Activated naive CD4-positive, alpha-beta T cell treated with anti-CD3 and anti-CD28 coated beads for 36 hours (primary cell): ENCODE measurements at regions of chr16 and their contacts with region 1.

Region 1: DNA sequence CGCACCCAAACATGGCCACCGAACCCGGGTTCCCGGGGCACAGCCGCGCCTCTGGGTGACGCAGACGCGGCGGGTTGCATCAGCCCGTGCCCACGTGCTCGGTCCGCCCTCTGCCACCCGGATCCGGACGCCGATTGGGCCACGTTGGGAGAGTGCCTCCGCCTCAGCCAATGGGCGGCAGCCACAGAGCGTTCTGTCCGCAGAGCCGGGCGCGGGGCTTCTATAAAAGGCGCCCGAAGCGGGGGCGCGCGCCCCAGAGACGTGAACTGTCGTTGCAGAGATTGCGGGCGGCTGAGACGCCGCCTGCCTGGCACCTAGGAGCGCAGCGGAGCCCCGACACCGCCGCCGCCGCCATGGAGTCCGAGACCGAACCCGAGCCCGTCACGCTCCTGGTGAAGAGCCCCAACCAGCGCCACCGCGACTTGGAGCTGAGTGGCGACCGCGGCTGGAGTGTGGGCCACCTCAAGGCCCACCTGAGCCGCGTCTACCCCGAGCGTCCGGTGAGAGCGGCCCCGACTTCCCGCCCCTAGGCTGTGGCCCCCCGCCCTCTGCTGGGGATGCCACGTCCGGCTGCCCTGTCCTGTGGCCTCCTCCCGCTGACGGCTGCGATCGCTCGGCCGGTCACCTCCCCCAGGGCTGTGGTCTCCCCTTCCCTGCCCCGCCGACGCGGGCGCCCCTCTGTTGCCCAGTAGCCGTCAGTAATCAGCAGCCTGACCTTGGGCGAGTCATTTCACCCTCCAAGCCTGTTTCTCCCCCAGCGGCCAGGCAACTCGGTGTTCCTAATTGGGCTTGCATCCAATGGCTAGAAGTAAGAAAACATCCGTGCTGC is at the start of gene HERPUD1:
- DNase-seq: peak; percentile 99
- H3K4me3 Mint-ChIP-seq: peak within 1 kb of the TSS; percentile 98
- H3K27ac Mint-ChIP-seq: peak within 1 kb of the TSS; percentile 98
- H3K4me1 Mint-ChIP-seq: peaks cover 40% of the 10 kb centered on the region
- H3K27me3 Mint-ChIP-seq: no peaks in the 10 kb centered on the region
- total RNA-seq, gene HERPUD1: 118 to 120 TPM

Region 2: GRCh38 chr16:56681939-56682702 is 250.0 kb before region 1 on chr16 and contains the start of gene MT1X:
- CTCF ChIA-PET with region 1: no interaction called
- intact Hi-C with region 1: loop called (anchors 5 kb)
- DNase-seq: peak; percentile 95
- H3K4me3 Mint-ChIP-seq: peak within 1 kb of the TSS; percentile 92
- H3K27ac Mint-ChIP-seq: peak within 1 kb of the TSS; percentile 96
- H3K4me1 Mint-ChIP-seq: peaks cover 19% of the 10 kb centered on the region
- H3K27me3 Mint-ChIP-seq: no peaks in the 10 kb centered on the region
- total RNA-seq, gene MT1X: 49.9 to 57.9 TPM

Region 3: DNA sequence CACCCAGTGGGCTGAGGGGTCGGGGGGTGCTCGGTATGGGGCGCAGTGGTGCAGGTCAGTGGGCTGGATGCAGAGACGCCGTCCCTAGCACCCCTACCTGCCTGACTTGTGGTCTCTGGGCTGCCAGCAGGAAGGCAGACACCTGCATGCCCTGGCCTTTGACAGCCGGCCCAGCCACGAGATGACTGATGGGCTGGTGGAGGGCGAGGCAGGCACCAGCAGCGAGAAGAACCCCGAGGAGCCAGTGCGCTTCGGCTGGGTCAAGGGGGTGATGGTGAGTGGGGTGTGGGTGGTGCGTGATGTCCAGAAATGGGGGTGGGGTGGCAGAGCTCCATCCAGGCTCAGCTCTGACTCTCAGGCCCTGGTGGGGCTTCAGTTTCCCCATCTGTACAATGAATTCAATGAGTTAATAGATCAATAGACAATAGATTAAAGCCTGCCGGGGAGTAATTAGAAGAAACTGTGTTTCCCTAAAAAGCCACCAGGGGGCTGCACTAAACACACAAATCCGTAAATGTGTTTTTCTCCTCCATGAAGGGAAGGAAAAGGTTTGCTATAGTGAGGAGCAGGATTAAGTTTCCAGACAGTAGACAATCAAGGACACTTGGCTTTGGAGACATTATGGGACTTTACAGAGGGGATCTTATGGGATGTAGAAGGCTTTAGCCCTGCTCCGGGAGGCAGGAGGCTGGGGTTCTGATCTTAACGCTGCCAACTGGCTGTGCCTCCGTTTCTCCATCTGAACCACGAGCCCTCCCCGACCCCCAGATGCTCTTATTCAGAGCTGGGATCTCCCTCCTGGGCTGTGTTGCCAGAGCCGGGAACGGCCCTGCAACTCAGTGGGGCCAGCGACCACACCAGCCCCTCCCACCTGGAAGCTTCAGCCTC is 64.9 kb before region 1 on chr16:
- CTCF ChIA-PET with region 1: interaction called, 5 read pairs
- intact Hi-C with region 1: loop called (anchors 1 kb)
- DNase-seq: peak; percentile 64
- H3K4me3 Mint-ChIP-seq: no peak overlapping the region
- H3K27ac Mint-ChIP-seq: no peak overlapping the region
- H3K4me1 Mint-ChIP-seq: peaks cover 15% of the 10 kb centered on the region
- H3K27me3 Mint-ChIP-seq: no peaks in the 10 kb centered on the region

Region 4: DNA sequence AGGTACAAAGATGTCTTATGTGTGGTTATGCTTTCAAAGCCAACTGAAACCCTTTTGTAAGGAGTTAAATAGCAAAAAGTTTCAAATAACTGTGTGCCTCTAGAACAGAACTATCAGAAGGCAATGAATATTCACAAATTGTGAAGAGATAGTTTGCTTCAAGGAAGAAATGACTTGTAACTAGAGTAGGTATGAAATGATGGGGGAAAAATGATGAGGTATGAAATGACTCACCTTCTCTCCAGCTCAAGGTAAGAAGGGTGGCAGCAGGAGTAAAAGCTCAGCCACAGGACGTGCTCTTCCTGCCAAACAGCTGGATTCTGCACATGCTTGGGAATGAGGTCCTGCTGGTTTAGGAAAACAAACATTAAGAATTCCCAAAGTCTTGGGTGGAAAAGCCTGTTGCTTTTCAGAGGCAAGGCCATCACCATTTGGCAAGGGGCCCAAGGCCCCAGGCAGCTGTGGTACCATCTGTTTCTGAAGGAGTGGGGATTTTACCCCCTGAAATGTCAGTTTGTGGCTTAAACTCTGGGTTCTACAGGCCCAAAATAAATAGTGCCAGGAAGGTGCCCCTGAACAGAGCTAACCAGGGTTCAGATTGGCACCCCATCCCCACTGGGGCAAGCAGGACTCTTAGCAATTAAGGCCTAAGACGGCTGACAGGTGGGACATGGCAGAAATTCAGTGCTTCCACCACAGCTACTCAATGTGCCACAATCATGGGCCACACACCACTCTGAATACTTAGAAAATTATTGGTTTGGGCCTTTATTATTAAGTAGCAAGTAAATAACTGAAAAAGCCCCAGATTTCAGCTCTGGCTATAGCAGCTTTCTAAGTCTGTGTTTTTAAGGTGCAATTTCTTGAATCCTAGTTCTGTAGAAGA is 13.1 kb after region 1 on chr16:
- CTCF ChIA-PET with region 1: interaction called, 7 read pairs
- intact Hi-C with region 1: loop called (anchors 1 kb)
- DNase-seq: peak; percentile 65
- H3K4me3 Mint-ChIP-seq: peak overlapping the region; percentile 3
- H3K27ac Mint-ChIP-seq: peak overlapping the region; percentile 96
- H3K4me1 Mint-ChIP-seq: peaks cover 56% of the 10 kb centered on the region
- H3K27me3 Mint-ChIP-seq: no peaks in the 10 kb centered on the region

Region 5: GRCh38 chr16:56988948-56989945 is 57.1 kb after region 1 on chr16 and contains the start of gene NLRC5:
- CTCF ChIA-PET with region 1: no interaction called
- intact Hi-C with region 1: loop called (anchors 2 kb)
- DNase-seq: peak; percentile 95
- H3K4me3 Mint-ChIP-seq: peak within 1 kb of the TSS; percentile 99
- H3K27ac Mint-ChIP-seq: peak within 1 kb of the TSS; percentile 100
- H3K4me1 Mint-ChIP-seq: peaks cover 73% of the 10 kb centered on the region
- H3K27me3 Mint-ChIP-seq: no peaks in the 10 kb centered on the region
- total RNA-seq, gene NLRC5: 104 to 119 TPM

Region 6: GRCh38 chr16:57045694-57046381 is 113.7 kb after region 1 on chr16:
- CTCF ChIA-PET with region 1: no interaction called
- intact Hi-C with region 1: loop called (anchors 1 kb)
- DNase-seq: peak; percentile 51
- H3K4me3 Mint-ChIP-seq: no peak overlapping the region
- H3K27ac Mint-ChIP-seq: peak overlapping the region; percentile 73
- H3K4me1 Mint-ChIP-seq: peaks cover 65% of the 10 kb centered on the region
- H3K27me3 Mint-ChIP-seq: no peaks in the 10 kb centered on the region

Region 7: DNA sequence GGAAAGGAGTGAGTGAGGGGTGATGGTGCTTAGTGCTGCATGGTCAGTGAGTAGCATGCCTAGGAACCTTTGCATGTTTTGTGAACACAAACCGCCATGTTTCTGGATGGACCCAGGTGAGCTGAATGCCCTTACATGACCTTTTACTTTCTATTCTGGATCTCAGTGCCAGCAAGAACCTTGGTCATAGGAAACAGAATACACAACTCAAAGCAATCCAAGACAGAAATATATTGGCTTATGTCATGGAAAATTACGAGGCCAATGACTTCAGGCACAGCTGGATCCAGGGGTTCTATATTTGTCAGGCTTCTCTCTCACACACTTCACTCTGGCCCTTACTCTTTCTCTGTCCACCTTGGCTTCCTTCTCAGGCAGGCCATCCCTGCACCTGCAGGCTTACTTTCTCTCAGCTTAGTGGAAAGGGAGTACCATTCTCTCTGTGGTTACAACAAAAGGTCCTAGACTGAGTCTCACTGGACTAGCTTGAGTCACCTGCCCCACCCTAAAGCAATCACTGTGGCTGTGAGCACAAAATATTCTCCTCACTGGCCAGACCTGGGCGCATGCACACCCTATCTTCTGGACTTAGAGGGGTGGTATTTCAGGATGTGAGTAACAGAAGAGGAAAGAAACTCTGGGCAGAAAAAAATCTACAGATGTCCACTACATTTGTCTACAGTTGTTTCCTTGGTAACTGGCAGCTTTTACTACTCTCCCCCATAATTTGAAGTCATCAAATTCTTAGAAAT is 139.9 kb after region 1 on chr16:
- CTCF ChIA-PET with region 1: no interaction called
- intact Hi-C with region 1: no loop called
- DNase-seq: no peak
- H3K4me3 Mint-ChIP-seq: no peak overlapping the region
- H3K27ac Mint-ChIP-seq: peak overlapping the region; percentile 44
- H3K4me1 Mint-ChIP-seq: peaks cover 12% of the 10 kb centered on the region
- H3K27me3 Mint-ChIP-seq: no peaks in the 10 kb centered on the region